ENCODE measurements at regions of chr9 and their contacts with region 1.

Region 1: DNA sequence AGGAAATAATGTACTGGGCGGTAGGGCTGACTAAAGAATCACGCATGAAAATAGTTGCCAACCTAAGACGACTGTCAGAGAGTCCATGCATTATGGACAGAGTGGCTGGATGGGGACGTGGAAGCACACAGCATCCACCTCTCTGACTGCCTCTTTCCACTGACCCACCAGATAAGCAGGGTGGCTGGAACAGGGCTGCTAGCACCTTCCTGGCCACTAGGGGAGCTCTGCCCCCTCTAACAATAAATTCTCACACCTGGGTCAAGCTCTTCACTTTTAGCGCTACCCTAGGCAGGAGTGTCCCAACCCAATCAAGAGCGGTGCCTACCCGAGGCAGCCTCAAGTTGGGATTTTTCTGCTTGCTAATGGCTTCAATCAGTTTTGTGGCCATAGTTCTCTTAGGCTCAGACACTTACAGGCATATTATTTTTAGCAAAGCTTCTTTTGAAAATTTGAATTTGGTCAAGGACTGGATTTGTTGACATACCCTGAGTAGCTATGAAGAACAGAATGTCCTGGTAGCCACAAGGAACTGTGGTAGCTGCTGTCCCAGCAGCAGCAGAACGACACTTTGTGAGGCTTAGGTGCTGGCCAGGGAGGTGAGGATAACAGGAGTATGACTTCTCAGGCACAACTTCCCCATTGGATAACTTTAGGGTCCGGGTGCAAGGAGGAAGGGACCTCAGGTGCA is 6.9 kb upstream of the TPM2 start:
- DNase-seq: peak; percentile 38 to 48 (median 46)
- H3K4me3 ChIP-seq: no peak overlapping the region
- H3K27ac ChIP-seq: no peak overlapping the region
- H3K4me1 ChIP-seq: no peaks in the 10 kb centered on the region
- H3K27me3 ChIP-seq: no peaks in the 10 kb centered on the region

Region 2: GRCh38 chr9:35489313-35490154 is 207.1 kb before region 1 on chr9 and contains the start of gene RUSC2:
- CTCF ChIA-PET with region 1: no interaction called
- POLR2A ChIA-PET with region 1: no interaction called
- DNase-seq: peak; percentile 92 to 97 (median 96)
- H3K4me3 ChIP-seq: peak within 1 kb of the TSS; percentile 66 to 90 (median 80)
- H3K27ac ChIP-seq: peak within 1 kb of the TSS; percentile 62 to 74
- H3K4me1 ChIP-seq: peaks cover 15 to 38% (median 35%) of the 10 kb centered on the region in 4 experiments
- H3K27me3 ChIP-seq: no peaks in the 10 kb centered on the region

Region 3: DNA sequence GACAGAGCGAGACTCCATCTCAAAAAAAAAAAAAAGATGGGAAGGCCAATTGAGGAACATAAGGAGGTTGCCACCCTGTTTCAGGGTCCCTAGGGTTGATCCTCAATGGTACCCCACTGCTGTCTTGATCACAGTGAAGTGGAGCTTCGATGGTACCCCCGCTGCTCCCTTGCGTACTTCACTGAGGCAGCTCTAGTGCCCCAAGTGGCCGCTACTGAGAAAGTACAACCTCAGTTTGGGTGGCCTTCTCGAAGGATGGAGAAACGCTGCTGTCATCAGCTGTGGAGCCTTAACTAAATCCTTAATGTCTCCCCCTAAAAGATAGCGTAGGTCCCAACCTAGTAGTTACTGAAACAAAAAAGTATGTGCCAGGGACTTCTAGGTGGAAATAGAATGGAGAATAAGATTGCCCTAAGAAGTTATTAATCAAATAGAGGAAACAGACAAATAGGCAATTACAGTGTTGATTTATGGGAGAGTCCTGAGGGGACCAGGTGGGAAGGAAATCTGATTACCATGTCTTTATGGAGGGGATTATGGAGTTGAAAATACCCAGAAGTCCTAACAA is 85.4 kb before region 1 on chr9:
- CTCF ChIA-PET with region 1: interaction called, 12 read pairs
- POLR2A ChIA-PET with region 1: no interaction called
- DNase-seq: peak; percentile 58 to 76 (median 75)
- H3K4me3 ChIP-seq: no peak overlapping the region
- H3K27ac ChIP-seq: no peak overlapping the region
- H3K4me1 ChIP-seq: peaks cover 0 to 7% (median 6%) of the 10 kb centered on the region in 4 experiments
- H3K27me3 ChIP-seq: no peaks in the 10 kb centered on the region

Region 4: GRCh38 chr9:35646533-35647265 is 50.0 kb before region 1 on chr9:
- CTCF ChIA-PET with region 1: interaction called, 17 read pairs
- POLR2A ChIA-PET with region 1: no interaction called
- DNase-seq: peak; percentile 91 to 94 (median 94)
- H3K4me3 ChIP-seq: peak overlapping the region; percentile 46 to 91 (median 84)
- H3K27ac ChIP-seq: peak overlapping the region; percentile 83 to 87
- H3K4me1 ChIP-seq: peaks cover 0 to 61% (median 34%) of the 10 kb centered on the region in 4 experiments
- H3K27me3 ChIP-seq: no peaks in the 10 kb centered on the region

Region 5: DNA sequence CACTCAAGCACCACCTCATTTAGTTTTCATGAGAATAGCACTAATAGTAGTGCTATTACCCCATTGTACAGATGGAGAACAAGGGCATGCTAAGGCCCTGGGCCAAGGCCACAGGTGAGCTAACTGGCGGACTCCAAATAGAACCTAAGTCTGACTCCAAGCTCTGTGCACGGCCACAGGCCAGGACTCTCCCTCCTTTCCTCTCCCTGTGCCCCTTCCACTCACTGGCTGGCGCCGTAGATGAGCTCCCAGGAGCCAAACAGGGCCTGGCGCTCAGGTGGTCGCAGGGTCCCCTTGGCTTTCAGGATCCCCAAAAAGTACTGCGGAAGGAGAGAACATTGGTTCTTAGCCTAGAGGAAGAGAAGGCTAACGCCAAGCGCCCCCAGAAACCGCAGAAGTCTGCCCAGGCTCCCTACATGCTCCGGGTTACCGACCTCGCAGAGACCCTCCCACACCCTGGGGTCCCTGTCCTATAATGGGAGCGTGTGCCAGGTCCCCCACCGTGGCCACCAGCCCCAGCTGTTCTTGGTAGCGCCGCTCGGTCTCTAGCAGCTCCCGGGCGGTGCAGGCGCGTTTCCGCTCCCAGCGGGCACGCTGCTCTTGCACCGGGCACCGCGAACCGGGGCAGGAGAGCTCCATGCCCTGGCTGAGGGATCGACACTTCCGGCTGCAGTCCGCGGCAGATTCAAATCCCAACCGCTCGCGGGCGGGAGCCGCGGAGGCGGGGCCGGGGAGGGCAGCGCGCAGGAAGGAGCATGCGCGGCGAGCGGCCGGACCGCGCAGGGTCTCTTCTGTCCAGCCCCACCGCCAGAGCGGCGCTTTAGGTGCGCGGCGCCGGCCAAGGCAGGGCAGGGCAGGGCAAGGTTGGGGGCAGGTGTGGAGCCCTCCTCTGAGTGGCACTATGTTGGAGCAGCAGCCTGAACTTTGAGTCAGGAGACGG is 31.9 kb before region 1 on chr9 and contains the start of gene ARHGEF39:
- CTCF ChIA-PET with region 1: interaction called, 33 read pairs
- POLR2A ChIA-PET with region 1: no interaction called
- DNase-seq: peak; percentile 51 to 68 (median 57)
- H3K4me3 ChIP-seq: peak within 1 kb of the TSS; percentile 64 to 88 (median 81)
- H3K27ac ChIP-seq: peak within 1 kb of the TSS in 1 of 2 experiments; percentile 70
- H3K4me1 ChIP-seq: peaks cover 12 to 55% (median 36%) of the 10 kb centered on the region in 4 experiments
- H3K27me3 ChIP-seq: no peaks in the 10 kb centered on the region

Region 6: GRCh38 chr9:35716230-35716629 is 19.6 kb after region 1 on chr9:
- CTCF ChIA-PET with region 1: interaction called, 86 read pairs
- POLR2A ChIA-PET with region 1: interaction called, 3 read pairs
- DNase-seq: no peak
- H3K4me3 ChIP-seq: no peak overlapping the region
- H3K27ac ChIP-seq: no peak overlapping the region
- H3K4me1 ChIP-seq: no peaks in the 10 kb centered on the region
- H3K27me3 ChIP-seq: no peaks in the 10 kb centered on the region

Region 7: DNA sequence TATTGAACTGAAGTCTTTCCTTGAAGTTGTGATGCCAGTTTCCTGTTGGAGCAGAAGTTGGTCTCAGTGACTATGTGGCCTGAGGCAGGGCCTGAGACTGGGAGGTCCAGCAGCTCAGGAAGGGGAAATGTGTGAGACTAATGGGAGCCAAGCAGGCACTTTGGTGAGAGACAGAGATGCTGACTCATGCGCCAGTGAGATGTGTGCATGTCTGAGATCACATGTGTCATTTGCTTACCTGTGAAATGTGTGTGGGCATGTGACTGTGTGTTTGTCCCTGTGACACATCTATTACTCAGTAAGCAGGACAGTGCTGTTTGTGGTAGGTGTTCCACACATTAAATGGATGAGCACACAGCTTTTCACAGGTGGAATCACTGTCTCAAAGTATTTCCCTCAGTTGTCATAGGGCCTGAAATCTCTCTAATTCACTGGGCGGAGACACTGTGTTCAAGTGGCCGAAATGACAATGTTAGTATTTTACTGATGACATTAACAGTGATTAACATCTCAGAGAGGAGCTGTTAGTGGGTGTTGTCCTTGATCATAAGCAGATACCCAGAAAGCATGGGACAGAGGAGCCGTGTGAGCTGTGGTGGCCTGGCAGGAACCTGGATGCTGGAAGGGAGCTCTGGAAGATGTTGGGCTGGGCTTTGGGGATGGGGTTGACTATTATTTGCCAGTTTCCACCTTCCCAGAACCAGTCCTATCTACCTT is 102.1 kb after region 1 on chr9:
- CTCF ChIA-PET with region 1: no interaction called
- POLR2A ChIA-PET with region 1: no interaction called
- DNase-seq: peak in 2 of 3 donors; percentile 49 to 66
- H3K4me3 ChIP-seq: no peak overlapping the region
- H3K27ac ChIP-seq: peak overlapping the region in 1 of 2 experiments; percentile 5
- H3K4me1 ChIP-seq: peaks cover 0 to 9% (median 3%) of the 10 kb centered on the region in 4 experiments
- H3K27me3 ChIP-seq: no peaks in the 10 kb centered on the region

Region 8: DNA sequence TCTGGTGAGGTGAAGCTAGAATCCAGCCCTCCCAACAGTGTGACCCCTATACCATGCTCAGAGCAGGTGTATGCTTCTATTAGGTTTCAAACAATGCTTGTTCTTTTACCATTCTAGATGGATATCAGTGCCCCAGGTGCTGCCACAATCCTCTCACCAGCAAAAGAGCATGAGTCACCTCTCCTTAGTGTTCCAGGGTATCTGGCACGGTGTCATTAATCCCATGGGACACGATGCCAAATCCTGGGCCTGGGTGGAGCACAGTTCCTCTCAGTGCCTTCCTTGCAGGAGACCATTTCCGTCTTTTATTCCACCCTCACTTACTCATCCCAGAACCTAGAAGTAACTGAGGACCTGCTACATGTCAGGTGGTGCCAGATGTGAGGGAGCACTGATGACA is 174.8 kb after region 1 on chr9:
- CTCF ChIA-PET with region 1: no interaction called
- POLR2A ChIA-PET with region 1: no interaction called
- DNase-seq: no peak
- H3K4me3 ChIP-seq: no peak overlapping the region
- H3K27ac ChIP-seq: no peak overlapping the region
- H3K4me1 ChIP-seq: no peaks in the 10 kb centered on the region
- H3K27me3 ChIP-seq: peaks cover 0 to 13% (median 0%) of the 10 kb centered on the region in 5 experiments